ENCODE measurements at regions of chr15 and their contacts with region 1.

Region 1: GRCh38 chr15:94230956-94231722 is at the start of gene MCTP2:
- H3K4me3 Mint-ChIP-seq: peak within 1 kb of the TSS; percentile 76
- H3K27ac Mint-ChIP-seq: peak within 1 kb of the TSS; percentile 65
- H3K4me1 Mint-ChIP-seq: peaks cover 47% of the 10 kb centered on the region
- H3K27me3 Mint-ChIP-seq: peaks cover 66% of the 10 kb centered on the region

Region 2: GRCh38 chr15:94297558-94297957 is 66.4 kb after region 1 on chr15:
- intact Hi-C with region 1: loop called (anchors 10 kb)
- H3K4me3 Mint-ChIP-seq: peak overlapping the region; percentile 17
- H3K27ac Mint-ChIP-seq: peak overlapping the region; percentile 66
- H3K4me1 Mint-ChIP-seq: peaks cover 33% of the 10 kb centered on the region
- H3K27me3 Mint-ChIP-seq: peaks cover 3% of the 10 kb centered on the region

Region 3: DNA sequence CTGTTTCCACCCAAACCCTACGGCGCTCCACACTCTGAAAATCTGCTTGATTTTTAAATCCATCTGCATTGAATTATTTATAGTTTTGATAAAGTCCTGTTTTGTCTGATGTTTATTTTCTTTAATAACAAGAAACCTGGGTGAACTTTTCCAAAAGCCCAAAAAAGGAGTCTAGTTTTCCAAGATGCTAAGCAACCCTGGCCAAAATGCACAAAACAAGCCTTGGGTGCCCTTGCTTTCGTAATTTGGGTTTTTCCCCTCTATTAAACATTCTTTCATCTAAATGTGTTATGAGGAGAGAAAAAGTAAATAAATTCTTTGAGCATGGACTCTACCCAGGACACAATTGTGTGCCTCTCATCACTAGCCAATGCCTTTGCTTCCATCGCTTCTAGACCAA is 469.1 kb after region 1 on chr15:
- intact Hi-C with region 1: no loop called
- H3K4me3 Mint-ChIP-seq: no peak overlapping the region
- H3K27ac Mint-ChIP-seq: no peak overlapping the region
- H3K4me1 Mint-ChIP-seq: no peaks in the 10 kb centered on the region
- H3K27me3 Mint-ChIP-seq: no peaks in the 10 kb centered on the region

Measured in dendritic cell treated with granulocyte-macrophage colony-stimulating factor and Interleukin-4, amounts not matched to agents 40 ng/mL and 50 ng/mL, for 4 days (primary cell).